ENCODE measurements at regions of chr15 and their contacts with region 1.

Region 1: GRCh38 chr15:68536331-68537095 is 42.3 kb upstream of the CORO2B start:
- DNase-seq: no peak

Region 2: GRCh38 chr15:68316061-68316804 is 220.3 kb before region 1 on chr15:
- intact Hi-C with region 1: loop called (anchors 10 kb)
- DNase-seq: peak in 9 of 42 donors; percentile 5 to 44 (median 18)

Region 3: DNA sequence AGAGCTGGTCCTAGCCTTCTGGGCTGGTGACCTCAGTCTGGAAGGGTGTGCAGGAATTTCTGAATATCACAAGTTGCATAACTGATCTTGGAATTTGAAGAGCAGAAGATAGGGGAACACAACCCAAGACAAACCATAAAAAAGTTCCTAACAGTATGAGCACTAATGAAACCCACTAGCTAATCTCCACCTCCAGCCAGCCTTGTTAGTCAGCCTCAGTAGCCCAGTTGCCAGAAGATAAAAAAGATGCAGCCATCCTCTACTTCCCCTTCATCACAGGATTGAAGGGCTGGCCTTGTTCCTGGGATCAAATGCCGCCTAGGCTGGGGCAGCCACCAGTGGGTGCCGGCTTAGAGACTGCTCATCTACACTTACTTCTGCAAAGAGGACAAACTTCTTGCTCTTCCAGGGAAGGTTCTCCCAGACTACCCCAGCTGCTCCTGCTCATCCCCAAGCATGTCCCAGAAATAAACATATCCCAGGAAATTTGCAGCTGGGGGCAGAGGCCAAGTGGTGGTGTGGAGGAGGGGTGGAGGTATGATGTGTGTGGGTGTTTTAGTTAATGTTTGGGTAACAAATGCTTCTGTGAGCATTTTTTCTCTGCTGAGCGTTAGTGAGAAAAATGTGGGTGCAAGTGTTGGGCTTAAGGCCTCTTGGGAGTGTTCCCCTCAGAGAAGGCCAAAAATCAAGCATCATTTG is 95.3 kb before region 1 on chr15:
- intact Hi-C with region 1: no loop called
- DNase-seq: no peak

Region 4: GRCh38 chr15:68991723-68992122 is 455.2 kb after region 1 on chr15:
- intact Hi-C with region 1: no loop called
- DNase-seq: no peak